Testis (tissue), 5 donors: ENCODE measurements at regions of chr2 and their contacts with region 1.

Region 1: GRCh38 chr2:42095923-42096408 is 48.1 kb downstream of the PKDCC start:
- DNase-seq: peak; percentile 90
- H3K4me3 ChIP-seq: no peak overlapping the region
- H3K27ac ChIP-seq: no peak overlapping the region
- H3K4me1 ChIP-seq: peaks cover 6% of the 10 kb centered on the region
- H3K27me3 ChIP-seq: no peaks in the 10 kb centered on the region
- CTCF ChIP-seq: peak; percentile 90 to 95 (median 94)
- POLR2A ChIP-seq: no peak

Region 2: GRCh38 chr2:42196403-42197267 is 100.7 kb after region 1 on chr2:
- intact Hi-C with region 1: loop called (anchors 10 kb)
- DNase-seq: peak; percentile 50
- H3K4me3 ChIP-seq: no peak overlapping the region
- H3K27ac ChIP-seq: no peak overlapping the region
- H3K4me1 ChIP-seq: peaks cover 13% of the 10 kb centered on the region
- H3K27me3 ChIP-seq: no peaks in the 10 kb centered on the region
- CTCF ChIP-seq: peak; percentile 35 to 50 (median 38)
- POLR2A ChIP-seq: no peak